AG04449 (cell line): ENCODE measurements at regions of chr13 and their contacts with region 1.

Region 1: GRCh38 chr13:51052581-51052980 is 58.5 kb downstream of the C13orf42 start:
- DNase-seq: no peak
- H3K4me3 ChIP-seq: no peak overlapping the region
- CTCF ChIP-seq: no peak

Region 2: GRCh38 chr13:51041126-51041525 is 11.5 kb before region 1 on chr13:
- CTCF ChIA-PET with region 1: no interaction called
- POLR2A ChIA-PET with region 1: no interaction called
- DNase-seq: no peak
- H3K4me3 ChIP-seq: no peak overlapping the region
- CTCF ChIP-seq: no peak

Region 3: DNA sequence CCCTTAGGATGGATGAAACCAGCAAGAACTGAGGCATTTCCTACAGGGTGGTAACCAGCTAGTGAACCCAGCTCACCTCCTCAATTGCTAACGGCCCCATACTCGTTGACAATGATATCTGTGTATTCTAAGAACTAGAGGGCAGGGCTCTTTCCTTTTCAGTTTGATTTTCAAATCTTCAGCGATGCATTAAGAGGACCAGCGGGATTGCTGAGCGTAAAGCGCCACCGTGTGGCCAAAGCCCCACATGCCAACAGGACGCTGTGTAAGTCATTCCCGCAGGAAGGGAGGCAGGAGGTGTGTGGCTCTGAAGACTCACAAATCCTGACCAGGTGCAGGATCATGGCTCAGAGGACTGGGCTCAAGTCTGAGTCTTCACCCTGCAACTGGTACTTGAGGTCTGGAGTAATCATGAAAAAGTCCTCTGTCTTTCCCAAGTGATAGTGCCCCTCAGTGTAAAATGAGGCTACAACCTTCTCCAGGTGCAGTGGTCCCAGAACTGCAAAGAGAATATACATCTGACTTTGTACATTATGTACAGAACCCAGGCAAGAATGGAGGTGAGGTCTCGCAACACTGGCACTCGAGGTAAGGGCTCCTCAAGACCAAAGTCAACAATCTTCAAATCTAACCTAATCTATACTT is 17.5 kb after region 1 on chr13:
- CTCF ChIA-PET with region 1: interaction called, 15 read pairs
- POLR2A ChIA-PET with region 1: no interaction called
- DNase-seq: peak; percentile 12
- H3K4me3 ChIP-seq: no peak overlapping the region
- CTCF ChIP-seq: peak; percentile 90

Region 4: GRCh38 chr13:51348069-51348967 is 295.7 kb after region 1 on chr13:
- CTCF ChIA-PET with region 1: no interaction called
- POLR2A ChIA-PET with region 1: no interaction called
- DNase-seq: no peak
- H3K4me3 ChIP-seq: no peak overlapping the region
- CTCF ChIP-seq: no peak